ENCODE measurements at regions of chr3 and their contacts with region 1.

Region 1: GRCh38 chr3:195442573-195443390 is at the start of gene ACAP2:
- DNase-seq: peak; percentile 100
- H3K4me3 ChIP-seq: peak within 1 kb of the TSS; percentile 67 to 97 (median 88)
- H3K27ac ChIP-seq: peak within 1 kb of the TSS; percentile 97 to 99 (median 98)
- H3K4me1 ChIP-seq: peaks cover 7 to 50% (median 25%) of the 10 kb centered on the region in 4 donors
- H3K27me3 ChIP-seq: no peaks in the 10 kb centered on the region
- CTCF ChIP-seq: no peak
- EP300 ChIP-seq: no peak
- POLR2A ChIP-seq: peak; percentile 97
- total RNA-seq, gene ACAP2: 17.3 to 97.5 (median 64.6) TPM

Region 2: DNA sequence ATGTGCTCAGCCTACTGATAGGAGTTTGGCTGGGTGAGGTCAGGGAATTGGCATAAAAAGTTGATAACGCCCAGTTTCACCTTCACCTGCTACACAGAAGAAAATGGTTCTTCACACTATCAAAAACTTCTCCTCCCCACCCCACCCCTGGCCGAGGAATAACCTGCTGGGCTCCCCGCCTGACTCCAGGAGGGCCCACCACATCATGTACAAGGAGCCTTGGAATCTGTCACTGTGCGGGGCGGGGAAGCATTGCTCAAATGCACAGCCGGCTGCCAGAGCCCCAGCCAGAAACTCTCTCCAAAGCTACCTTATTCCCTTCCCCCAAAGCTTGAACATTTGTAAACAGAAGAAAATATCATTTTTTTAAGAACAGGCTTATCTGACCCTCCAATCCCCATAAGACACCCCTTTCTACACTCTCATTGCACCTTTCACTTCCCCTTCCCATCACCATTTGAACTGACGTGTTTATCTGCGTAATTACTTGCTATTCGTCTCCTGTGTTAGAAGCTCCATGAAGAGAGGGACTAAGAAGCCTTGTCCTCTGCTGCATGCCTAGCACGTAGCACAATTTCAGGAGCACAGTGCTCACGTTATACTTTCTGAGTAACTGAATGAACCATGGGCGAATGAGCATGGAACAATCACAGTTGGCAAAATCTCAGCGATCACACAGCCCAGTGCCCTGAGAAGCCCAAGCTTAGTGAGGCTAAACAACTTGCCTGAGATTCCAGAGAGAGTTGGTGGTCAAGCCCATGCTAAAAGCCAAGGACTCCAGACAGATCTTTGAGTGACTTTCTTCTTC is 1223.9 kb before region 1 on chr3:
- in situ Hi-C with region 1: no loop called
- intact Hi-C with region 1: no loop called
- DNase-seq: no peak
- H3K4me3 ChIP-seq: no peak overlapping the region
- H3K27ac ChIP-seq: no peak overlapping the region
- H3K4me1 ChIP-seq: no peaks in the 10 kb centered on the region
- H3K27me3 ChIP-seq: no peaks in the 10 kb centered on the region
- CTCF ChIP-seq: no peak
- EP300 ChIP-seq: no peak
- POLR2A ChIP-seq: no peak

Region 3: GRCh38 chr3:195542698-195543499 is 100.1 kb after region 1 on chr3 and contains the start of gene PPP1R2:
- in situ Hi-C with region 1: no loop called
- intact Hi-C with region 1: loop called (anchors 5 kb)
- DNase-seq: peak; percentile 95
- H3K4me3 ChIP-seq: peak within 1 kb of the TSS; percentile 73 to 94 (median 82)
- H3K27ac ChIP-seq: peak within 1 kb of the TSS; percentile 94 to 98 (median 96)
- H3K4me1 ChIP-seq: peaks cover 11 to 68% (median 41%) of the 10 kb centered on the region in 4 donors
- H3K27me3 ChIP-seq: no peaks in the 10 kb centered on the region
- CTCF ChIP-seq: no peak
- EP300 ChIP-seq: no peak
- POLR2A ChIP-seq: peak; percentile 97
- total RNA-seq, gene PPP1R2: 50.7 to 143 (median 59.4) TPM

Region 4: GRCh38 chr3:195597848-195598247 is 155.1 kb after region 1 on chr3:
- in situ Hi-C with region 1: no loop called
- intact Hi-C with region 1: no loop called
- DNase-seq: no peak
- H3K4me3 ChIP-seq: no peak overlapping the region
- H3K27ac ChIP-seq: no peak overlapping the region
- H3K4me1 ChIP-seq: no peaks in the 10 kb centered on the region
- H3K27me3 ChIP-seq: no peaks in the 10 kb centered on the region
- CTCF ChIP-seq: no peak
- EP300 ChIP-seq: no peak
- POLR2A ChIP-seq: no peak

Region 5: GRCh38 chr3:196793235-196793641 is 1350.5 kb after region 1 on chr3:
- in situ Hi-C with region 1: no loop called
- intact Hi-C with region 1: no loop called
- DNase-seq: no peak
- H3K4me3 ChIP-seq: no peak overlapping the region
- H3K27ac ChIP-seq: no peak overlapping the region
- H3K4me1 ChIP-seq: no peaks in the 10 kb centered on the region
- H3K27me3 ChIP-seq: no peaks in the 10 kb centered on the region
- CTCF ChIP-seq: no peak
- EP300 ChIP-seq: no peak
- POLR2A ChIP-seq: no peak